ENCODE measurements at regions of chr21 and their contacts with region 1.

Region 1: DNA sequence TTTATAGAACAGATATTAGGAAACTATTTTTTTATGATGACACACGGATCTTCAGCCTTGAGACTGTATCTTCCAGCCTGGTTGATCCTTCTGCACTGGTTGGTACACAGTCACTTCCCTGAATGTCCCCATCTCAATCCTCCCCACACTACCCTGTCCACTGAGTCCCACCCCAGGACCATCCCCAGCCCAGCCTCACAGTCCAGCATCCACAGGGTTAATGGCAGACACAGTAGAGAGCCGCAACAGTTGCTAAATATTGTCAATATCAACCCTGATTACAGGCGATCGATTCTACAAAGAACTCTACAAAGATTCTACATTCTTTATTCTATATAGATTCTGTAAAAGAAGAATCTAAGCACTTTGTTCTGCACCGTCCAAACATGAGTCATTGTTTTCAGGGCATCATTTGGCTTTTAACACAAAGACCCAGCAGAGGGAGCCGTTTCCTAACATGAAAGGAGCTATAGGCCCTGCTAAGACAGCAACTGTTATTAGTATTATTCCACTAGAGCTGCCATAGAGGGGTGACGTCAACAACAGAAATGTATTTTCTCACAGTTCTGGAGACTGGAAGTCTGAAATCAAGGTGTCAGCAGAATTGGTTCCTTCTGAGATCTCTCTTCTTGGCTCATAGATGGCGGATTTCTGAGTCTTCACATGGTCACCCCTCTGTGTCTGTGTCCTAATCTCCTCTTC is 30.1 kb upstream of the IFNAR2 start:
- DNase-seq: peak; percentile 88
- ATAC-seq: peak; percentile 87
- H3K4me3 Mint-ChIP-seq: no peak overlapping the region
- H3K27ac Mint-ChIP-seq: no peak overlapping the region
- H3K4me1 Mint-ChIP-seq: peaks cover 29% of the 10 kb centered on the region
- H3K27me3 Mint-ChIP-seq: no peaks in the 10 kb centered on the region

Region 2: DNA sequence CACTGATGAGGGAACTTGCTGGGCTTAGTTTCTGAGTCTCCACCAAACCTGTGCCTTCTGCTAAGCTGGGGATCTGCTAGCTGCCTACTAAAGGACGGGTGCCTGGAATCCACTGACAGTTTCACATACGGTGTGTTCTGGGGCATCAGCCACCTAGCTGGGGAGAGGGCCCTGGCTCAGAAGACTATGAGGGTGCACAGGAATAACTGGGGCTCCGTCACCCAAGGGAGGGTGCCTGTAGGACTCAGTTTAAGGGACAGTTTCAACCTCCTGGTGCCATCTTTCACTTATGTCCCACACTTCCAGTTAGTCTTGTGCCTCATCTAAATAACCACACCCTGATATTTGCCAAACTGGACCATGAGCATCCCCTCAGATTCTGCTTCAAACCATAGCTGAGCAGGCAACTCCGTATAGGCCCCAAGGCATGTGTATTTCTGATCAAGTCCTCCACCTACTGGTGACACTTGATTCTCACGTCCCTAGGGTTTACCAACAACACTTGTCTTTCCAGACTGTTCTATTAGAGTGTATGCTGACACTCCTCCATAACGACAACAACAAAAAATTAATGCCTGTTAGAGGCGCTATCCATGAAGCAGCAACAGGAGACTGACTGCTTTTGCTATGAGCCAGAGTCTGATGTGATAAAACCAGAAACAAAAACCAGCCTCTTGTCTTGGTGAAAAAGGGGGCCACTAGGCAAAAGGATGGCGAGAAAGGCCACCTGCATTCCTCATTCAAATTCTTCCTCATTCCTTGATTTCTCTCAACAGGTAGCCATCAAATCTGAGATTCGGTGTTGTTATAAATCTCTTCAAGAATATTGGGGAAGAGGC is 373.1 kb before region 1 on chr21:
- CTCF ChIA-PET with region 1: interaction called, 24 read pairs
- POLR2A ChIA-PET with region 1: no interaction called
- intact Hi-C with region 1: loop called in 1 of 2 experiments (anchors 1 kb)
- DNase-seq: peak; percentile 56
- ATAC-seq: peak; percentile 94
- H3K4me3 Mint-ChIP-seq: no peak overlapping the region
- H3K27ac Mint-ChIP-seq: no peak overlapping the region
- H3K4me1 Mint-ChIP-seq: no peaks in the 10 kb centered on the region
- H3K27me3 Mint-ChIP-seq: no peaks in the 10 kb centered on the region

Region 3: GRCh38 chr21:32994305-32994704 is 205.4 kb before region 1 on chr21:
- CTCF ChIA-PET with region 1: interaction called, 4 read pairs
- POLR2A ChIA-PET with region 1: no interaction called
- intact Hi-C with region 1: loop called (anchors 2 kb)
- DNase-seq: no peak
- ATAC-seq: no peak
- H3K4me3 Mint-ChIP-seq: no peak overlapping the region
- H3K27ac Mint-ChIP-seq: no peak overlapping the region
- H3K4me1 Mint-ChIP-seq: no peaks in the 10 kb centered on the region
- H3K27me3 Mint-ChIP-seq: peaks cover 8% of the 10 kb centered on the region

Region 4: DNA sequence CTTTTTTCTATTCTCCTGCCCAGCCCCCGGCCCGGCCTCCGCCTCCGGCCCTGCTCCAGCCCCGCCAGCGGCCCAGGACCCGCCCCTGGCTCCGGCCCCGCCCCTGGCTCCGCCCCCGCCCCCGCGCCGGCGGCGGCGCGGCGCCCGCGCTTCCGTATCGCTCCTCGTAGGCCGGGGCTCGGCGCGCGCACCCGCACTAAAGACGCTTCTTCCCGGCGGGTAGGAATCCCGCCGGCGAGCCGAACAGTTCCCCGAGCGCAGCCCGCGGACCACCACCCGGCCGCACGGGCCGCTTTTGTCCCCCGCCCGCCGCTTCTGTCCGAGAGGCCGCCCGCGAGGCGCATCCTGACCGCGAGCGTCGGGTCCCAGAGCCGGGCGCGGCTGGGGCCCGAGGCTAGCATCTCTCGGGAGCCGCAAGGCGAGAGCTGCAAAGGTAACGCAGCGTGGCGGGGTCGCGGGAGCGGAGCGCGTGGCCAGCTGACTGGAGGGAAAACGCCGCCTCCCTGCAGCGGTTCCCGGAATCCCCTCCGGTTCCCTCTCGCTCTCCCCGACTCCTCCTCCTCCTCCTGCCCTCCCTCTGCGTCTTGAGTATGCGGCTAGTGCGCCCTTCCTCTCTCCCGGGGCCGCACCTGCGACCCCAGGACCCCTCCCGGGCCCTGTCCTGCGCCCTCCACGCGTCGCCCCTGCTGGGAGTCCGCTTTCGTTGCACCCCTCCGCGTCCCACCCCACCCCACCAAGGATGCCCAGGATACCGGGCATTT is 30.3 kb after region 1 on chr21 and contains the start of gene IFNAR2:
- CTCF ChIA-PET with region 1: interaction called, 9 read pairs
- POLR2A ChIA-PET with region 1: no interaction called
- intact Hi-C with region 1: loop called in 1 of 2 experiments (anchors 1 kb)
- DNase-seq: peak; percentile 85
- ATAC-seq: peak; percentile 55
- H3K4me3 Mint-ChIP-seq: peak within 1 kb of the TSS; percentile 84
- H3K27ac Mint-ChIP-seq: peak within 1 kb of the TSS; percentile 91
- H3K4me1 Mint-ChIP-seq: peaks cover 54% of the 10 kb centered on the region
- H3K27me3 Mint-ChIP-seq: no peaks in the 10 kb centered on the region
- total RNA-seq, gene IFNAR2: 26.6 to 29.8 TPM

Region 5: GRCh38 chr21:33324291-33325221 is 124.9 kb after region 1 on chr21 and contains the start of gene IFNAR1:
- CTCF ChIA-PET with region 1: interaction called, 15 read pairs
- POLR2A ChIA-PET with region 1: interaction called, 7 read pairs
- intact Hi-C with region 1: loop called in 1 of 2 experiments (anchors 2 kb)
- DNase-seq: peak; percentile 100
- ATAC-seq: peak; percentile 95
- H3K4me3 Mint-ChIP-seq: no peak within 1 kb of the TSS
- H3K27ac Mint-ChIP-seq: no peak within 1 kb of the TSS
- H3K4me1 Mint-ChIP-seq: peaks cover 31% of the 10 kb centered on the region
- H3K27me3 Mint-ChIP-seq: no peaks in the 10 kb centered on the region
- total RNA-seq, gene IFNAR1: 21.8 to 29.6 TPM

Region 6: DNA sequence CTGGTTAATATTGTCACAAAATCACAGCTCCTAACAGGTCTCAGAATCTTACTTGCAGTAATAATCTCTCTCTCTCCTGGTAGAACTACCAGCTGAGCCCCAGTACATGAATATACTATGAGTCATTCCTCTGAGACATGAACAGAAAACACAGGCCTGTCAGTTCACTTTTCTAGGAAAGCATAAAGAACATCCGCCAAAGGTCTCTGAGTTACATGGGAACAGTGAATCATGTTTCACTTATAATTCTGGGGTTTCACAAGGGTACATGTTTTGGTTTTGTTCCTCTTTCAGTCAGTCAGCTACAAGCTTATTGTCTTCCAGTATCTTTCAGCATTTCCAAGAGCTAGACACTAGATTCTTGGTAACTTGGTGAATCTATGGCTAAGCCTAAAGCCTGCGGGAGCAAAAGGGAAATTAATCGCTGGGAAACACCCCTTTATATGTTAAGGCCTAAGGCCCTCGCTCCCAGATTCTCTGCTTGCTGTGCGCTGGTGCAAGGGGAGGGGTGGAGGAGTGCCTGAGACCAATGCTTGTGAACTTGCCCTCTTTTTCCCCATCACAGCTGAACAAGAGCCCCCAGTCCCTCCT is 235.2 kb after region 1 on chr21:
- CTCF ChIA-PET with region 1: interaction called, 5 read pairs
- POLR2A ChIA-PET with region 1: interaction called, 4 read pairs
- intact Hi-C with region 1: loop called in 1 of 2 experiments (anchors 2 kb)
- DNase-seq: peak; percentile 53
- ATAC-seq: peak; percentile 96
- H3K4me3 Mint-ChIP-seq: peak overlapping the region; percentile 4
- H3K27ac Mint-ChIP-seq: peak overlapping the region; percentile 59
- H3K4me1 Mint-ChIP-seq: peaks cover 26% of the 10 kb centered on the region
- H3K27me3 Mint-ChIP-seq: no peaks in the 10 kb centered on the region

Region 7: DNA sequence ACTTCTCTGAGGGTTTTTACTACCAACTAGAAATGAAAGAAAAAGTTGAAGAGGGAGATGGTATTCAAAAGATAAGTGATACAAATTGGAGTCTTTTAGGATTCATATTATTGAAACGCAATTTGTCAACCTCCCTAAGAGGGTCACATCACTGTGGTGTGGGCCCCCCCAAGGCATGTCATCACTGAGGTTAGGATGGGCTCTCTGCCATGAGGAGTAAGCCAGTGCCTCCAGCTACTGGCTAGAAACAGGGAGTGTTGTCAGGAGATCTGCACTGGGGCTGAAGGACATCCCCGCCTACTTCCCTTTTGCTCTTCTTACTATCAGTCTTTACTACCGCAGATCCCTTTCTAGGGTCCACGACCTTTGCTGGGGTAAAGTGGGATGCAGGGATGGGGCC is 468.5 kb after region 1 on chr21:
- CTCF ChIA-PET with region 1: no interaction called
- POLR2A ChIA-PET with region 1: no interaction called
- intact Hi-C with region 1: no loop called
- DNase-seq: no peak
- ATAC-seq: no peak
- H3K4me3 Mint-ChIP-seq: no peak overlapping the region
- H3K27ac Mint-ChIP-seq: no peak overlapping the region
- H3K4me1 Mint-ChIP-seq: no peaks in the 10 kb centered on the region
- H3K27me3 Mint-ChIP-seq: no peaks in the 10 kb centered on the region